Transverse colon (tissue), 4 donors: ENCODE measurements at regions of chr16 and their contacts with region 1.

Region 1: GRCh38 chr16:22001591-22001990 is 675 bp upstream of the PDZD9 start:
- DNase-seq: no peak
- H3K4me3 ChIP-seq: no peak overlapping the region
- H3K27ac ChIP-seq: no peak overlapping the region
- H3K4me1 ChIP-seq: peaks cover 0 to 21% (median 8%) of the 10 kb centered on the region in 4 donors
- H3K27me3 ChIP-seq: no peaks in the 10 kb centered on the region
- CTCF ChIP-seq: no peak
- EP300 ChIP-seq: no peak
- POLR2A ChIP-seq: no peak

Region 2: DNA sequence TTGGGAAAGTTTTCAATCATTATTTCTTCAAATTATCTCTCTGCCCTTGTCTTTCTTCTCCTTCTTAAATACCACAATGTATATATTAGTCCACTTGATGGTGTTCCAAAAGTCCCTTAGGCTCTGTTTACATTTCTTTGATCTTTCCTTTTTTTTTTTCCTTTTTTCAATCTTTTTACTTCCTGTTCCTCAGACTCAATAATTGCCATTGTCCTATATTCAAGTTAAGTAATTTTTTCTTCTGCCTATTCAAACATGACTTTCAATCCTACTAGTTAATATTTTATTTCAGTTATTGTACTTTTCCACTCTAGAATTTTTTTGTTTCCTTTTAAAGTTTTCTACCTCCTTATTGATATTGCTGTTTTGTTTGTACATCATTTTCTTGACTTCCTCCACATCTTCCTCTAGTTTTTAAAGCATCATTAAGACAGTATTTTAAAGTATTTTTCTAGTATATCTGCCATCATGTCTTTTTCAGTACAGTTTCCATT is 64.2 kb before region 1 on chr16:
- in situ Hi-C with region 1: no loop called
- intact Hi-C with region 1: no loop called
- DNase-seq: no peak
- H3K4me3 ChIP-seq: no peak overlapping the region
- H3K27ac ChIP-seq: peak overlapping the region in 1 of 4 donors; percentile 12
- H3K4me1 ChIP-seq: peaks cover 0 to 20% (median 11%) of the 10 kb centered on the region in 4 donors
- H3K27me3 ChIP-seq: no peaks in the 10 kb centered on the region
- CTCF ChIP-seq: no peak
- EP300 ChIP-seq: no peak
- POLR2A ChIP-seq: no peak

Region 3: GRCh38 chr16:22070361-22071330 is 69.1 kb after region 1 on chr16:
- in situ Hi-C with region 1: loop called in 3 of 4 experiments (anchors 5 to 10 kb)
- intact Hi-C with region 1: loop called (anchors 5 kb)
- DNase-seq: no peak
- H3K4me3 ChIP-seq: no peak overlapping the region
- H3K27ac ChIP-seq: no peak overlapping the region
- H3K4me1 ChIP-seq: no peaks in the 10 kb centered on the region
- H3K27me3 ChIP-seq: no peaks in the 10 kb centered on the region
- CTCF ChIP-seq: no peak
- EP300 ChIP-seq: no peak
- POLR2A ChIP-seq: no peak

Region 4: DNA sequence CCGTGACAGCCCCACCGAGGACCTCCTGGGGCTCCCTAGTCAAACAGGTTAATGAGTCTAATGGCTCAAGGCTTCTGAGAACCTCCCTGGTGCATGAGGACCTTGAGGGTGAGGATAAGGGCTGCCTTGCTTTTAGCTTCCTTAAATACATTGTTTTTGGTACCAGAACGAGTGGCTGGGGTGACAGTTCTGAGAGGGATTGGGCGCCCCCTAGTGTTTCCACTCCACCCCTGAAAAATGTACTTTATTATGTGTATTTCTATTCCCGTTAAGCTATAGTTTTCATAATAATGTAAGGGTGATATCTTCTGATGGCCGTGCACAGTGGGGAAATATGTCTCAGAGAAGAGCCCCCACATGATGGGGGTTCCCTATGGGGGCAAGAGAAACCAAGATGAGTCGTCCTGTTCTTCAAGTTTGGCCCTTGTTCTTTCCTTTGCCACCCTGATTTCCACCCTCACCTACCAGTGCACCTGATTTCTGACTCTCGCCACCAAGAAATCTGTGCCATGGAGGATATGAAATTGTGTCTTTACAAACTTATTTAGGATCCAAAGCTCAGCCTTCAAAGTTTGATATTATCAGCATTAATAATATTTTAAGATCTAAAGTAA is 76.2 kb after region 1 on chr16:
- in situ Hi-C with region 1: loop called in 3 of 4 experiments (anchors 5 to 10 kb)
- intact Hi-C with region 1: loop called (anchors 5 kb)
- DNase-seq: peak; percentile 69
- H3K4me3 ChIP-seq: no peak overlapping the region
- H3K27ac ChIP-seq: no peak overlapping the region
- H3K4me1 ChIP-seq: no peaks in the 10 kb centered on the region
- H3K27me3 ChIP-seq: no peaks in the 10 kb centered on the region
- CTCF ChIP-seq: peak; percentile 73 to 87 (median 81)
- EP300 ChIP-seq: no peak
- POLR2A ChIP-seq: no peak

Region 5: GRCh38 chr16:22188595-22189442 is 187.2 kb after region 1 on chr16:
- in situ Hi-C with region 1: loop called (anchors 5 to 10 kb)
- intact Hi-C with region 1: loop called (anchors 5 kb)
- DNase-seq: peak; percentile 82
- H3K4me3 ChIP-seq: peak overlapping the region in 1 of 4 donors; percentile 67
- H3K27ac ChIP-seq: peak overlapping the region; percentile 89 to 99 (median 96)
- H3K4me1 ChIP-seq: peaks cover 14 to 39% (median 26%) of the 10 kb centered on the region in 4 donors
- H3K27me3 ChIP-seq: no peaks in the 10 kb centered on the region
- CTCF ChIP-seq: peak; percentile 79 to 93 (median 83)
- EP300 ChIP-seq: no peak
- POLR2A ChIP-seq: no peak